GM10248 (cell line): ENCODE measurements at regions of chr9 and their contacts with region 1.

Region 1: GRCh38 chr9:132877824-132878694 is at the start of gene AK8:
- DNase-seq: peak; percentile 95
- CTCF ChIP-seq: no peak

Region 2: DNA sequence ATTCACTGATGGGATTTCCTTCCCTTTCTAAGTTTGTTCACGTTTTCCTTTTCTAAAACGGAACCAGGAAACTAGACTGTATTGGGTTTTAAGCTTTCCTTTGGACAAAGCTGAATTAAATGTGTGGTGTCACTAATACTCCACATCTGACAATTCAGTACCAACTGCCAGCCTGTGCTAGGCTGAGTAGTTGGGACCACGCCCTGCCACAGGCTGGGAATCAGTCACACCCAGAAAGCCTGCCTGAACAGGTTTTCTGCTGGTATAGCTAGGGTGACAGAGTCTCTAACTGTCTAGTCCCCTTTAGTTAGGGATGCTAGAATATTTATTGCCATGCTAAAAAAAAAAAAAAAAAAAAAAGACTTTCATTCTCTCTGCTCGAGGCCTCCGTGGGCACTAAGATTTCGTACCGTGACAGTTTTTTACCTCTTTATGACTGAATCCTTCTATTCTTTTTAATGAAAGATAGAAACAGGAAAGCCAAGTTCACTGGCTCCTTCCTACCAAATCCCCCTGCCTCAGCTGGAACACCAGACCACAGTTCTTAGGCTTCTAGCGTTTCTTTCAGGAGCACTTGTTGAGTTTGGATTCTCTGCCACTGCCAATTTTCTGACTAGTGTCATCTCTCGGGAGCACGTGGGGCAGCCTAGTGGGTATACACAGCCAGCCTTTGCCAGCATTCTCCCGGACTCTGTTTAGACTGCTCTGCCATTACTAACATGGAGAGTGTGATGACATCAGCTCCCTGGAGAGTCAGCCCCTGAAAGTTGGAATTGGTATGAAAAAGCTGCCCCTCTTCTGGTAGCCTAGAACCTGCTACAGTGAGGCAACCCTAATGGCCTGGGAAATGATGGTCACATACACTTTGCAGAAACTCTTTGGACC is 16.5 kb after region 1 on chr9:
- CTCF ChIA-PET with region 1: interaction called, 42 read pairs
- POLR2A ChIA-PET with region 1: no interaction called
- DNase-seq: no peak
- CTCF ChIP-seq: no peak